Transverse colon (tissue), 4 donors: ENCODE measurements at regions of chr18 and their contacts with region 1.

Region 1: DNA sequence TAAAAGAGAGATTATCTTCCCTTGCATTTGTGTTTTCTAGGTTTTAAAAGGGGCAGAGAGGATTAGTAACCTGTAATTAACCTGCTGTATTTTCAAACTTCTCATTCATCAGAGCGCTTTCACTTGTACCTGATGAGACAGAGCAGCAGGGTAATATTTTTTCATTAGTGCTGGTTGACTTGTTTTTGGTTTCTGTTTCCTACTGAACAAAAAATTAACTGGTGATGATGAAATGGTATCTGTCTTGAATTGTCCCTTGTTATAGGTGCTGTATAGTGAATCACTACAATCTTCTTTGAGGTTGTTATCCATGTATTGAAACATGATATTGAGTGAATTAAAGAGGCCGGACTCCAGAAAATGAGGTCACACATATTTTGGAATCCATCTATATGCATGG is 37.9 kb downstream of the CDH20 start:
- DNase-seq: no peak
- H3K4me3 ChIP-seq: no peak overlapping the region
- H3K27ac ChIP-seq: no peak overlapping the region
- H3K4me1 ChIP-seq: no peaks in the 10 kb centered on the region
- H3K27me3 ChIP-seq: no peaks in the 10 kb centered on the region
- CTCF ChIP-seq: no peak
- EP300 ChIP-seq: no peak
- POLR2A ChIP-seq: no peak

Region 2: DNA sequence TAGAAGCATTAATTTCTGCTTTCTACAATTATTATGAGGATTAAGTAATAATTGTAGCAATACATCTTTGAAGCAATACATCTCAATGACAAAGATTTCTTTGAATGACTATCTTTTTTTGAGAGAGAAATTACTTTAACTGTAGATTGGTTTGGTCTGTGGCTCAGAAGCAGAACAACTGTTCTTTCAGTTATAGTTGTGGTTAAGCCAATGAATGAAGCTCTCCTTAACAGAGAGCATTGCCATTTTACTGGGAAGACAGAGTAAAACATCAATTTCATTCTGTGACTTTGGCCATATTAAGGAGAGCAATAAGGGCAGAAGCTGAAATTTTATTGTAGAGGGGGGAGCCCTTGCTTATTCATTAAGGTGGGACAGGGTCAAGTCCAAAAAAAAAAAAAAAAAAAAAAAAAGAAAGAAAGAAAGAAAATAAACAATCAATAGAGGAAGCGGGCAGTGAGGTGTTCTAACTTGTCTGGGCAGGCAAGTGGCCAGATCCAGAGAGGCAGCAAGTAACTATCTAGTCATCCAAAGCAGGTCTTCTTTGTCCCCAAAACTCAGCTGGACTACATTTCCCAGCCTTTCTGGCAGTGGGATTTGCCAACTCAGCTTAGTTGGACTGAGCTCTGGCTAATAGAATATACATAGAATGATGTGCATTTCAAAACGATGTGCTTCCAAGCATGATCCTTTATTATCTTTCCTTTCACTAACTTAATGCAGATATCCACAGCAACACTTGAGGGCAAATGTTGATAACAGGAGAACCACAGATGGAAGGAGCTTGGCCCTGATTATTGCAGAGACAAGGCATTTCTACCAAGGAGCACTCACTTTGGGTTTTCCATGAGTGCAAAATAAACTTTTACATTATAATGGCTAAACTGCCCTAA is 500.6 kb before region 1 on chr18:
- in situ Hi-C with region 1: no loop called
- intact Hi-C with region 1: no loop called
- DNase-seq: no peak
- H3K4me3 ChIP-seq: no peak overlapping the region
- H3K27ac ChIP-seq: no peak overlapping the region
- H3K4me1 ChIP-seq: no peaks in the 10 kb centered on the region
- H3K27me3 ChIP-seq: no peaks in the 10 kb centered on the region
- CTCF ChIP-seq: no peak
- EP300 ChIP-seq: no peak
- POLR2A ChIP-seq: no peak

Region 3: GRCh38 chr18:61400716-61401115 is 29.6 kb after region 1 on chr18:
- in situ Hi-C with region 1: no loop called
- intact Hi-C with region 1: loop called (anchors 1 kb)
- DNase-seq: no peak
- H3K4me3 ChIP-seq: no peak overlapping the region
- H3K27ac ChIP-seq: no peak overlapping the region
- H3K4me1 ChIP-seq: no peaks in the 10 kb centered on the region
- H3K27me3 ChIP-seq: no peaks in the 10 kb centered on the region
- CTCF ChIP-seq: no peak
- EP300 ChIP-seq: no peak
- POLR2A ChIP-seq: no peak